GM12878 (cell line): ENCODE measurements at regions of chr5 and their contacts with region 1.

Region 1: DNA sequence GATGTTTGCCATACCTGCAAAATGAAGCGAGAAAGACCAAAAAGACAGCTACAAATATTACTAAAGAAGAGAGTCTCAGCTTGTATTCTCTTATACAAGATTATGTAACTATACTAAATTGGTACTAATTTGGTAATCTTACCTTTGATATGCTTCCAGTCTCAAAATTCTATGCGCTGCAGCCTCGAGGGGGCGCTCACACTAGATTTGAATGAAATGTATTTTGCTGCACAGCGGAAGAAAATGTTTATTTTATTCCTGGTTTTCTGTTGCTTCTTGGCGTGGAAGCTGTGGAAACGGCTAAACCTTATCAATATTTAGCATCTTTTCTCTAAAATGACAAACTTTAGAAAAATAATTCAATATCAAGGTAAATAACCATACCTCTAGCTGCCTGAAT is 267.0 kb upstream of the NUDT12 start:
- DNase-seq: no peak
- ATAC-seq: 0 out of 3 replicates have a peak, but pooled peaks have one; percentile 42
- H3K4me3 ChIP-seq: no peak overlapping the region
- H3K27ac ChIP-seq: no peak overlapping the region
- H3K4me1 ChIP-seq: no peaks in the 10 kb centered on the region
- H3K27me3 ChIP-seq: no peaks in the 10 kb centered on the region; a peak in 2 of 4 replicates
- CTCF ChIP-seq: peak; percentile 40 to 41 (median 41)
- EP300 ChIP-seq: no peak
- POLR2A ChIP-seq: no peak
- RAD21 ChIP-seq: 0 out of 2 replicates have a peak, but pooled peaks have one; percentile 7

Region 2: DNA sequence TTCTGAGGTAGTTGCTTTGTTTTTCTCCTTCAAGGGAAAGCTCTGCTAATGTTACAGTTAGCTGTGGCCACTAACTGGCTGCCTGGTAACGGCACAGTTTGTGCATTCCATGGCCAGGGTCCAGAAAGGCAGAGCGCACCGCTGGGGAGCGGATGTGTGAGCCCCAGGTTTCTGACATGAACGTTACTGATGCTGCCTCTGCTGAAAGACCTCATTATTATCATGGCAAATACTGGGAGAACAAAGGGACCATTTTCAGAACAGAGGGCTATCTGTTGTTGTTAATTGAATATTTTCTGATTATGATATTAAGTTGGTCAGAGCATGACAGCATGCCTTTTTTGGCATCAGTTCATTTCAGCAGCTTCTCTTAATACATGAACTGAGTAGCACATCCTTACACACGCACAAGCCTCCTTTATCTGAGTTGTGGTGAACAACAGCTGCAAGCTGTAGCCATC is 401.1 kb before region 1 on chr5:
- CTCF ChIA-PET with region 1: no interaction called
- POLR2A ChIA-PET with region 1: no interaction called
- RAD21 ChIA-PET with region 1: no interaction called
- SMC1A ChIA-PET with region 1: no interaction called
- in situ Hi-C with region 1: no loop called
- intact Hi-C with region 1: no loop called
- DNase-seq: no peak
- ATAC-seq: peak; percentile 67
- H3K4me3 ChIP-seq: no peak overlapping the region
- H3K27ac ChIP-seq: no peak overlapping the region
- H3K4me1 ChIP-seq: no peaks in the 10 kb centered on the region
- H3K27me3 ChIP-seq: no peaks in the 10 kb centered on the region
- CTCF ChIP-seq: no peak
- EP300 ChIP-seq: no peak
- POLR2A ChIP-seq: no peak
- RAD21 ChIP-seq: no peak

Region 3: DNA sequence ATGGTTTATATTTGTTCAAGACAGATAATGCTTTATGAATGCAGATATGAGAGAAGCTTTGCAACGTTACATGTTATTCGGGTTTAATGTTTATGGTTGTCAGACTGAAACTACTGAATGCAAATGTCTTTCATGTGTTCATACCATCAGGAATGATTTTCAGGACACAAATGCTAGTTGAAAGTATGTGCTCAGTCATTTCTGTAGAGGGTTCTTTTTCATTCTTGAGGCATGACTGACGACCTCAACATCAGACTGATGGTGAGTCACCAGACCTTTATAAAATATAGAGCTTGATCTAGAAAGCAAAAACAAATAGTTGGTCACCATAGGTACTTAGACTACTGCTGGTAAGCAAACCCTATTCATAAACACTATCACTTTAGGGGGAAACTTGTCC is 20.3 kb after region 1 on chr5:
- CTCF ChIA-PET with region 1: interaction called, 13 read pairs
- POLR2A ChIA-PET with region 1: no interaction called
- RAD21 ChIA-PET with region 1: no interaction called
- SMC1A ChIA-PET with region 1: interaction called, 4 read pairs
- in situ Hi-C with region 1: no loop called
- intact Hi-C with region 1: no loop called
- DNase-seq: peak; percentile 7
- ATAC-seq: peak; percentile 84
- H3K4me3 ChIP-seq: no peak overlapping the region
- H3K27ac ChIP-seq: no peak overlapping the region
- H3K4me1 ChIP-seq: no peaks in the 10 kb centered on the region
- H3K27me3 ChIP-seq: no peaks in the 10 kb centered on the region
- CTCF ChIP-seq: no peak
- EP300 ChIP-seq: no peak
- POLR2A ChIP-seq: no peak
- RAD21 ChIP-seq: no peak

Region 4: GRCh38 chr5:103889517-103890209 is 60.1 kb after region 1 on chr5:
- CTCF ChIA-PET with region 1: interaction called, 10 read pairs
- POLR2A ChIA-PET with region 1: no interaction called
- RAD21 ChIA-PET with region 1: interaction called, 3 read pairs
- SMC1A ChIA-PET with region 1: interaction called, 3 read pairs
- in situ Hi-C with region 1: no loop called
- intact Hi-C with region 1: no loop called
- DNase-seq: peak; percentile 9
- ATAC-seq: peak; percentile 98
- H3K4me3 ChIP-seq: no peak overlapping the region
- H3K27ac ChIP-seq: no peak overlapping the region
- H3K4me1 ChIP-seq: no peaks in the 10 kb centered on the region
- H3K27me3 ChIP-seq: no peaks in the 10 kb centered on the region
- CTCF ChIP-seq: no peak
- EP300 ChIP-seq: no peak
- POLR2A ChIP-seq: no peak
- RAD21 ChIP-seq: no peak

Region 5: GRCh38 chr5:103953601-103954382 is 124.2 kb after region 1 on chr5:
- CTCF ChIA-PET with region 1: no interaction called
- POLR2A ChIA-PET with region 1: no interaction called
- RAD21 ChIA-PET with region 1: no interaction called
- SMC1A ChIA-PET with region 1: no interaction called
- in situ Hi-C with region 1: no loop called
- intact Hi-C with region 1: no loop called
- DNase-seq: no peak
- ATAC-seq: no peak
- H3K4me3 ChIP-seq: no peak overlapping the region
- H3K27ac ChIP-seq: no peak overlapping the region
- H3K4me1 ChIP-seq: no peaks in the 10 kb centered on the region
- H3K27me3 ChIP-seq: no peaks in the 10 kb centered on the region
- CTCF ChIP-seq: no peak
- EP300 ChIP-seq: no peak
- POLR2A ChIP-seq: no peak
- RAD21 ChIP-seq: no peak

Region 6: GRCh38 chr5:103993031-103993430 is 163.4 kb after region 1 on chr5:
- CTCF ChIA-PET with region 1: interaction called, 16 read pairs
- POLR2A ChIA-PET with region 1: no interaction called
- RAD21 ChIA-PET with region 1: no interaction called
- SMC1A ChIA-PET with region 1: interaction called, 3 read pairs
- in situ Hi-C with region 1: no loop called
- intact Hi-C with region 1: no loop called
- DNase-seq: no peak
- ATAC-seq: no peak
- H3K4me3 ChIP-seq: no peak overlapping the region
- H3K27ac ChIP-seq: no peak overlapping the region
- H3K4me1 ChIP-seq: no peaks in the 10 kb centered on the region
- H3K27me3 ChIP-seq: no peaks in the 10 kb centered on the region
- CTCF ChIP-seq: no peak
- EP300 ChIP-seq: no peak
- POLR2A ChIP-seq: no peak
- RAD21 ChIP-seq: no peak